ENCODE measurements at regions of chr10 and their contacts with region 1.

Region 1: DNA sequence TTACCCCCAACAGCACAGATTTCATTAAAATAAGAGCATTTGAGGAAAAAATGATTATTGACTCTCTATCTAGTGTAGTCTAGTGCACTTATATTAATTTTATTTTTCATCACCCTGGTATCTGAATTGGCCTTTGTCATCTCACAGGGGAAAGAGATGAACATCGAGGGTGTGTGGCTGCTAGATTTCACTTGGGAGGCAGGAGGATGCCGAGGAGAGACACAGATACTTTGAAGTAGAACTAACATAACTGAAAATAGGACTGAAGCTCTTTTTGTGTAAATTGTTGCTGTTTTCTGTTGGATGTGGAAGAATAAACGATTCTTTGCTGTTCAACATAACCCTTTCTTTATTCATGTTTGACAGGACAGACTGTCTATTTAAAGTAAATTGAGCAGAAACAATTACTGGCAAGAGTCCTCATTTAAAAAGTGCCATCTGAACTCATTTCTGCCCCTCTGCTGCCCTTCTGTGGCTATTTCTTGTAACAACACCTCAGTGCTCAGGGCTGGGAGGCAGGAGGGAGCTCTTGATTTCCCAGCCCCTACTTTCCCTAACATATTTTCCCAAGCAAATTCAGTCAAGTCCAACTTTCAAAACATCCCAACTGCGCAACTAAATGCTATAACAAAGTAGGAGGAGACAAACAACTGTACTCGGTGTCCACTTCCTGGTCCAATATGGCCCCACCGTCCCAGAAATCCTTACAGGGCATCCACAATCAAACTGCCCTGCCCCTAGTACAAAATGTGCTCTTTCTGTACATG is 15.6 kb downstream of the LYZL1 start:
- DNase-seq: peak; percentile 15 to 56
- ATAC-seq: peak; percentile 69 to 94 (median 84)
- H3K4me3 ChIP-seq: peak overlapping the region in 2 of 10 donors; percentile 10 to 13
- H3K27ac ChIP-seq: peak overlapping the region in 3 of 10 donors; percentile 25 to 41 (median 38)
- H3K4me1 ChIP-seq: peaks cover 0 to 11% (median 7%) of the 10 kb centered on the region in 9 donors
- H3K27me3 ChIP-seq: peaks cover 0 to 4% (median 0%) of the 10 kb centered on the region in 7 donors
- CTCF ChIP-seq: peak; percentile 37 to 86 (median 80)

Region 2: GRCh38 chr10:28663576-28664313 is 640.7 kb before region 1 on chr10:
- intact Hi-C with region 1: loop called (anchors 1 to 10 kb)
- DNase-seq: peak; percentile 74 to 79
- ATAC-seq: peak; percentile 77 to 92 (median 90)
- H3K4me3 ChIP-seq: no peak overlapping the region
- H3K27ac ChIP-seq: no peak overlapping the region
- H3K4me1 ChIP-seq: peaks cover 0 to 14% (median 4%) of the 10 kb centered on the region in 9 donors
- H3K27me3 ChIP-seq: peaks cover 0 to 29% (median 4%) of the 10 kb centered on the region in 7 donors
- CTCF ChIP-seq: peak; percentile 93 to 98 (median 96)

Region 3: GRCh38 chr10:28975891-28976531 is 328.4 kb before region 1 on chr10:
- intact Hi-C with region 1: loop called in 1 of 10 experiments (anchors 10 kb)
- DNase-seq: no peak
- ATAC-seq: peak in 1 of 8 donors; percentile 42
- H3K4me3 ChIP-seq: no peak overlapping the region
- H3K27ac ChIP-seq: no peak overlapping the region
- H3K4me1 ChIP-seq: no peaks in the 10 kb centered on the region
- H3K27me3 ChIP-seq: no peaks in the 10 kb centered on the region
- CTCF ChIP-seq: no peak

Region 4: DNA sequence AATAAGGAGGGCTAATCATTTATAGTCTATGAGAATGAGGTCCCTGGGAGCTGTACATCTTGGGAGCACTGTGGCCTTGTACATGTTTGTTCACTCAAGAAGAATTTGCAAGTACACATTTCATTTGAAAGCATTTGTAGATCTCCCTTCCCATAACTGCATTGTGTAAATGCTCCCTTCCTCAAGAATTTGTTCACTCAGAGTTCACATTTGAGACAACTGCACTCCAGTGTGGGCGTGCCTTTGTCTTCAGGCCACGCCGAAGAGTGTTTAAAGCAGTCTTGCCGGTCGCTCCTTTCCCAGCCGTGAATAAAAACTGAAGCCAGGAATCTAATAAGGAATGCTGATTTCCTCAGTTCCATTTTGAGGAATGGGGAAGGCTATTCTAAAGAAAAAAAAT is 306.7 kb before region 1 on chr10:
- intact Hi-C with region 1: loop called in 3 of 10 experiments (anchors 5 to 10 kb)
- DNase-seq: no peak
- ATAC-seq: no peak
- H3K4me3 ChIP-seq: no peak overlapping the region
- H3K27ac ChIP-seq: no peak overlapping the region
- H3K4me1 ChIP-seq: no peaks in the 10 kb centered on the region
- H3K27me3 ChIP-seq: no peaks in the 10 kb centered on the region
- CTCF ChIP-seq: no peak

Region 5: GRCh38 chr10:29131952-29132820 is 172.3 kb before region 1 on chr10:
- intact Hi-C with region 1: loop called in 3 of 10 experiments (anchors 5 to 10 kb)
- DNase-seq: peak in 1 of 2 donors; percentile 49
- ATAC-seq: peak; percentile 51 to 88 (median 69)
- H3K4me3 ChIP-seq: peak overlapping the region in 1 of 10 donors; percentile 30
- H3K27ac ChIP-seq: peak overlapping the region in 5 of 10 donors; percentile 2 to 39 (median 20)
- H3K4me1 ChIP-seq: peaks cover 0 to 18% (median 14%) of the 10 kb centered on the region in 9 donors
- H3K27me3 ChIP-seq: no peaks in the 10 kb centered on the region
- CTCF ChIP-seq: no peak

Measured in heart right ventricle (tissue), 16 donors.